H1 (cell line): ENCODE measurements at regions of chr2 and their contacts with region 1.

Region 1: DNA sequence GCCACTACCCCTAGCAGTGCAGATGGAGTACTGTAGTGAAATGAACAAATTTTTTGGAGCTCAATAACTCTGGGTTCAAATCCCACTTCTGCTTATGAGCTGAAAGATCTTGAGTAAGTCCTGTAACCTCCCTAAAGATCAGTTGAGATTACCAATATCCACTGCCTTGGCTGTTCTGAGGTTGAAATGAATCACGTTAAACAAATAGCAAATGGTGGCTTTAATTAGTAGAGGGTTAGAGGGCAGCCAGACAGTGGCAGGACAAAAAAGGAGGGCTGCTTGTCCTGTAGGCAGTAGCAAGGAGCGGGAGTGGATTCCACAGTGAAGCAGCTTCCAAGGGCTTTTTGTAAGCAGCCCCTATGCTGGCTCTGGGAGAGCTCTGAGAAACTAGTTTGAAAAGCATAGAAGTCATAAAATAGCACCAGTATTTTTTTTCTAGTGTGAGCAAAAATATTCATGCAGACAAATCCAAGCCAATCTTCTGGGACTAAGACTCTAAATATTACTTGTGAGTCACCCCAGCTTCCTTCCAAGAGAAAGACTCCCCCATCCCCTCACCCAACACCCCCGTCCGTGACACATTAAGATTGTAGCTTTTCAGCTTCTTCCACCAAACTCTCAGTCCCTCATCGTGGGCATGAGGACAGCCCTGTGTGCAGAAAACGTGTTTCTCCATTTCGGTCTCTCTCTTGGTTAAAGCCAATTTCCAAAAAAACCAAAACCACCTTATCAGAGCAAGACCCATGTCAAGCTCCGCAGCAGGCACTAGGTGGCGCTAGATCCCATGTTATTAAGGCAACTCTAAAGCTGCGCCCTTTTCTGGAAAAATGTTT is 123.5 kb upstream of the LGALSL start:
- DNase-seq: peak; percentile 54 to 87
- H3K4me3 ChIP-seq: no peak overlapping the region
- H3K27ac ChIP-seq: no peak overlapping the region
- H3K4me1 ChIP-seq: peaks cover 3 to 21% (median 11%) of the 10 kb centered on the region in 4 experiments; a peak in 6 of 7 replicates
- H3K27me3 ChIP-seq: no peaks in the 10 kb centered on the region
- CTCF ChIP-seq: peak; percentile 63 to 92 (median 86)
- EP300 ChIP-seq: no peak
- POLR2A ChIP-seq: no peak
- RAD21 ChIP-seq: peak; percentile 98

Region 2: GRCh38 chr2:64165706-64166105 is 164.8 kb before region 1 on chr2:
- CTCF ChIA-PET with region 1: no interaction called
- POLR2A ChIA-PET with region 1: no interaction called
- DNase-seq: no peak
- H3K4me3 ChIP-seq: no peak overlapping the region
- H3K27ac ChIP-seq: no peak overlapping the region
- H3K4me1 ChIP-seq: no peaks in the 10 kb centered on the region
- H3K27me3 ChIP-seq: peaks cover 0 to 1% (median 0%) of the 10 kb centered on the region in 4 experiments; a peak in 1 of 7 replicates
- CTCF ChIP-seq: no peak
- EP300 ChIP-seq: no peak
- POLR2A ChIP-seq: no peak
- RAD21 ChIP-seq: no peak

Region 3: GRCh38 chr2:64222351-64222750 is 108.1 kb before region 1 on chr2:
- CTCF ChIA-PET with region 1: interaction called, 39 read pairs
- POLR2A ChIA-PET with region 1: no interaction called
- DNase-seq: no peak
- H3K4me3 ChIP-seq: no peak overlapping the region
- H3K27ac ChIP-seq: no peak overlapping the region
- H3K4me1 ChIP-seq: peaks cover 4 to 15% (median 12%) of the 10 kb centered on the region in 4 experiments; a peak in 6 of 7 replicates
- H3K27me3 ChIP-seq: no peaks in the 10 kb centered on the region
- CTCF ChIP-seq: no peak
- EP300 ChIP-seq: no peak
- POLR2A ChIP-seq: no peak
- RAD21 ChIP-seq: no peak

Region 4: DNA sequence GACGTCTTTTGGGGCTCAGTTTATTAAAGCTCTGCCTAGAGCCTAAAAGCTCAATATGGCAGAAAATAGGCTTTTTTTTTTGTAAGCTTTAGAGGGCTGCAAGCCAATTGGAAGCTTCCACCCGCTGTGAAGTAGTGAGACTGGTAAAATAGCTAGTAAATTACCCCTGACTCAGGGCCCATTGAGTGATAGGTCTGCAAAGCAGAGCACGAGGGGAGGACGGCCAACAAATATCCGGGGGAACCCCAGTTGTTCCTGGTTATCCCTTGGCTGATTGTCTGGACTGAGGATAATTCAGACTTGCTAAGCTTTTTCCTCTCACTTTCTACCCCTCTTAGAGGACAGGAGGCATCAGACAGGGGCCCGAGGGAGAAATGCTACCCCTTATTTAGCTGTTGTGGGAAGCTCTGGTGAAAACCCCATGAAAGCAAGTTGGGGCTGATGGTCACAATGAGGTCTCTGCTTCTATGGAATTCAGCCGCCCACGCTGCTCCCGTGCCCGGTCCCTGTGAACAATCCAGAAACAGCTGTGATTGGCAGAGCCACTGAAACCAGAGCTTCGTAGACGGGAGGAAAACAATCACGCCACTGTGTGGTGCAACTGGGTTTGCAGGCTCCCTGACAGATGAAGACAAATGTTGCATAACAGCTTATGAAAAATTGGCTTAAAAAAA is 18.4 kb before region 1 on chr2:
- CTCF ChIA-PET with region 1: interaction called, 63 read pairs
- POLR2A ChIA-PET with region 1: interaction called, 7 read pairs
- DNase-seq: peak in 1 of 2 experiments; percentile 49
- H3K4me3 ChIP-seq: no peak overlapping the region
- H3K27ac ChIP-seq: no peak overlapping the region
- H3K4me1 ChIP-seq: peaks cover 3 to 10% (median 8%) of the 10 kb centered on the region in 4 experiments; a peak in 5 of 7 replicates
- H3K27me3 ChIP-seq: no peaks in the 10 kb centered on the region; a peak in 1 of 7 replicates
- CTCF ChIP-seq: peak in 2 of 3 experiments; percentile 5 to 32; a peak in 2 of 4 replicates
- EP300 ChIP-seq: no peak
- POLR2A ChIP-seq: no peak
- RAD21 ChIP-seq: peak; percentile 28 to 43; a peak in 2 of 4 replicates

Region 5: DNA sequence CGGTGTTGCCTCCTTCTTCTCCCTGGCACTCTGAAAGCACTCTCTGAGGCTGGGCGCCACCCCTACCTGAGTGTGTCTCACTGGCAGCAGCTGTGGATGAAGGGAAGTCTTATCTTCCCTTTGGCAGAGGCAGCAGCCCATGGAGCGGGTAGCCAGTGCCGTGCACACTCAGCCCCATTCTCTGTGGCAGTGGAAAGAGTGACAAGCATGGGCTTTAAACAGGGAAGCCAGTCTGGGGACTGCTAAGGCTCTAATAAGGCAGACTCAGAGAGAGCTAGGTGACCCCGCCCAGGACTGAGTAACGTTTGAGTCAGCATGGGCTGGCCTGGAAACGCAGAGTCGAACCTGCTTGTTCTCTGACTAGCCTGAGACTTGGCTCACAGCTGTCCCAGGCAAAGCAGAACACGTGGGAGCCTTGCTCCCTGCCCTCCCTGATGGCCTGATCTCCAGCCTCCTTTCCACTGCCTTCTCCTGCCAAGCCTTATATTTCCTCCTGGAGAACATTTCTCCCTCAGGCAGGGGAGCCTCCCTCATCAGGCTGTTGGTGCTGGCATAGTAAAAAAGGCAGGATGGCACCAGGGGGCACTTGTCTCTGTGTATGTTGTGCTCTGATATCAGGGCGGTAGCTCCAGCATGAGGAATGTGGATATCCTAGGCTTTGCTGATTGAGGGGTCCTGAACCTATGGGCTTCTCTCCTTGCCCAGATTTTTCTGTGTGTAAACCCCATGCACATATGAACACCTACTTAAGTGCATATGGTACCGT is 29.6 kb after region 1 on chr2:
- CTCF ChIA-PET with region 1: interaction called, 24 read pairs
- POLR2A ChIA-PET with region 1: no interaction called
- DNase-seq: no peak
- H3K4me3 ChIP-seq: no peak overlapping the region
- H3K27ac ChIP-seq: no peak overlapping the region
- H3K4me1 ChIP-seq: peaks cover 3 to 18% (median 7%) of the 10 kb centered on the region in 4 experiments; a peak in 6 of 7 replicates
- H3K27me3 ChIP-seq: 0 out of 7 replicates have a peak, but pooled peaks cover 0 to 4% (median 0%) of the 10 kb centered on the region in 4 experiments
- CTCF ChIP-seq: peak in 1 of 3 experiments; percentile 26; a peak in 1 of 4 replicates
- EP300 ChIP-seq: no peak
- POLR2A ChIP-seq: no peak
- RAD21 ChIP-seq: peak; percentile 9 to 24; a peak in 2 of 4 replicates

Region 6: GRCh38 chr2:64474121-64474571 is 143.6 kb after region 1 on chr2:
- CTCF ChIA-PET with region 1: interaction called, 214 read pairs
- POLR2A ChIA-PET with region 1: interaction called, 4 read pairs
- DNase-seq: no peak
- H3K4me3 ChIP-seq: no peak overlapping the region
- H3K27ac ChIP-seq: no peak overlapping the region
- H3K4me1 ChIP-seq: peaks cover 0 to 9% (median 4%) of the 10 kb centered on the region in 4 experiments; a peak in 5 of 7 replicates
- H3K27me3 ChIP-seq: no peaks in the 10 kb centered on the region
- CTCF ChIP-seq: no peak
- EP300 ChIP-seq: no peak
- POLR2A ChIP-seq: no peak; a peak in 1 of 3 replicates
- RAD21 ChIP-seq: no peak

Region 7: DNA sequence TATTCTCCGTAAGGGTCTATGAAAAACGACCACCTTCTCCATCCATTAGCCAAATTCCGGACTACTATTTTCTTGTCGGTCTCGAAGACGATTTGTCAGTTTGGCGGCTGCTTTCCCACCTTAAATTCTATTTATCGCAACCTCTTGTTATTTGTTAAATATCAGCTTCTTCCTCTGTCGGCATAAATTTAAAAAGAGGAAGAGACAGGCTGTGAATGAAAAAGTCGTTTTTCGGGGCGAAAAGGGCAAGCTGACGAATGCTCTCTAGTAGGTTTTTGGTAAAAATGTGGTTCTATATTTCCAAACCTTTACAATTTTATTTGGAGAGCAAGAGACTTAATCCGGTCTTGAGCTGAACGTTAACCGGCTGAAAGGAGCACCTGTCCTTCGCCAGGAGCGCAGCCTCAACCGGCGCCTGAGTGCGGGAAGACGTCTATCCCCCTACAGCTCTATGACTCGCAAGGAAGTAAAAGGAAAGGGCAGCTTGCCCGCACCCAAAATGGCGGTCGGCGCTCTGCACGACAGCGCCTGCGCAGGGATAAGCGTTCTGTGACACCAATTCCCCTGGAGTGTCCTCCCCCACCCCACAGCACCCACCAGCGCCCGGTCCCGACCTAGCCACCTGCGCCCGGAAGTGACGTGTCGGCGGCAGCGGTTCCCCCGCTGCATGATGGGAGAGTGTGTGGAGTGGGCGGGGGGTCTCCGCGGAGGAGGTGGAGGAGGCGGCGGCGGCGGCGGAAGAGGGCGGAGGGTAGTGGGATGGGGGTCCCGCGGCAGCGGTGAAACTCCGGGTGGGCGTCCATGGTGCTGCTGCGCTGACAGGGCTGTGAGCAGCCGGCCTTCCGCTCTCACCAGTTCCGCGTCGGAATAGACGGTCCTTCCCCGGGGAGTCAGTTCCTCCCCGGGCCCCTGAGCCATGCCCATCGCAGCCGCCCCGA is 193.4 kb after region 1 on chr2 and contains the start of gene AFTPH:
- CTCF ChIA-PET with region 1: interaction called, 28 read pairs
- POLR2A ChIA-PET with region 1: interaction called, 3 read pairs
- DNase-seq: peak; percentile 95 to 98
- H3K4me3 ChIP-seq: peak within 1 kb of the TSS; percentile 73 to 88 (median 82)
- H3K27ac ChIP-seq: peak within 1 kb of the TSS; percentile 48
- H3K4me1 ChIP-seq: peaks cover 0 to 4% (median 0%) of the 10 kb centered on the region in 4 experiments; a peak in 1 of 7 replicates
- H3K27me3 ChIP-seq: no peaks in the 10 kb centered on the region
- CTCF ChIP-seq: no peak
- EP300 ChIP-seq: no peak
- POLR2A ChIP-seq: peak in 1 of 2 experiments; percentile 74; a peak in 2 of 3 replicates
- RAD21 ChIP-seq: 0 out of 4 replicates have a peak, but pooled peaks of 1 of the 2 experiments have one; percentile 1
- total RNA-seq, gene AFTPH: 13.5 and 15.0 TPM in 2 replicates